Endothelial cell of umbilical vein (primary cell): ENCODE measurements at regions of chrX and their contacts with region 1.

Region 1: DNA sequence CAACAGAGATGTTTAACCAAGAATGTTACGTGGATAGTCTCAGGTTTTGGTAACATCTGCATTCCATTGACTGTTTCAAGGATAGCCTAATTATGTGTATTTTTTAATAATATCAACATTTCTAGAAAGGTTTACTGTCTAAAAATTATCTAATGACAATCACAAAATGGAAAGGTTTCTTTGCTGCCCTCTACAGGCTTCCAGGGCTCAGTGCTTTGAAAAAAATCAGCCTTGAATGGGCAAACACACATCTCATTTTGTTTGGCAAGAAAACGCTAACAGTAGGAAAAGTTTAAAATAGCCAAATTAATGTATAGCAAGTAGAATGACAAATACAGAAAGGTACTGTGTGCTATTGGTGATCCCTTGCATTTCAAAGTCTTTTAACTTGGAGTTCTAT is 223.4 kb upstream of the PRPS2 start:
- DNase-seq: peak; percentile 9
- H3K4me3 ChIP-seq: no peak overlapping the region
- H3K27ac ChIP-seq: no peak overlapping the region
- H3K4me1 ChIP-seq: no peaks in the 10 kb centered on the region
- H3K27me3 ChIP-seq: no peaks in the 10 kb centered on the region
- CTCF ChIP-seq: peak; percentile 41 to 46
- POLR2A ChIP-seq: no peak

Region 2: GRCh38 chrX:11944501-11944900 is 623.4 kb before region 1 on chrX:
- CTCF ChIA-PET with region 1: no interaction called
- POLR2A ChIA-PET with region 1: no interaction called
- dilution Hi-C with region 1: no loop called
- intact Hi-C with region 1: loop called (anchors 10 kb)
- DNase-seq: peak; percentile 15
- H3K4me3 ChIP-seq: no peak overlapping the region
- H3K27ac ChIP-seq: no peak overlapping the region
- H3K4me1 ChIP-seq: peaks cover 3% of the 10 kb centered on the region
- H3K27me3 ChIP-seq: no peaks in the 10 kb centered on the region
- CTCF ChIP-seq: peak; percentile 54 to 63
- POLR2A ChIP-seq: no peak

Region 3: GRCh38 chrX:12080265-12080664 is 487.6 kb before region 1 on chrX:
- CTCF ChIA-PET with region 1: interaction called, 9 read pairs
- POLR2A ChIA-PET with region 1: no interaction called
- dilution Hi-C with region 1: no loop called
- intact Hi-C with region 1: loop called (anchors 1 kb)
- DNase-seq: peak; percentile 42
- H3K4me3 ChIP-seq: no peak overlapping the region
- H3K27ac ChIP-seq: no peak overlapping the region
- H3K4me1 ChIP-seq: no peaks in the 10 kb centered on the region
- H3K27me3 ChIP-seq: no peaks in the 10 kb centered on the region
- CTCF ChIP-seq: peak; percentile 31 to 45
- POLR2A ChIP-seq: no peak

Region 4: DNA sequence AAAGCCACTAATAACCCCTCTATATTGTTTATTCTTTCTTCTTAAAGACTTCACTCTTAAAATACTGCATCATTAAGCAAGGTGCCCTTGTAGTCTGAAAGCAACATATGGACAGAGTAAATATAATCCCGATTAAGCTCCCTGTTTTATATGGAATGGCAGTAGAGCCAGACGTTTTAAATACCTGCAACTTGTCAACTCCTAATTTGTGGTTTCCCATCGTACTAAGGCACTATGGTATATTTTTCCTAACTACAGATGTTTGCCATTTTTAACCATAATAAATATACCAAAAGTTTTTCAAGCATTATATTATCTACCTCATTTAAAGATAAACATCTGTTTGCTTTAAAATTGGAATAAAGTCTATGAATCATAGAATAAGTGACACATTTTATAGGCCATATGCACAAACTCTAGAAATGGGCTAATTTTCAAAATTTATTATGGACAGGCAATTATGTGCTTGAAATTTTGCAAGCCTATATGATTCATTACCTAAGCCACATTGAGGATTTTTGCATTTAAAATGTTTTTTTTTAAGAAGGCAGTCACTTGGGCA is 235.0 kb before region 1 on chrX:
- CTCF ChIA-PET with region 1: no interaction called
- POLR2A ChIA-PET with region 1: no interaction called
- dilution Hi-C with region 1: no loop called
- intact Hi-C with region 1: loop called (anchors 10 kb)
- DNase-seq: no peak
- H3K4me3 ChIP-seq: no peak overlapping the region
- H3K27ac ChIP-seq: no peak overlapping the region
- H3K4me1 ChIP-seq: no peaks in the 10 kb centered on the region
- H3K27me3 ChIP-seq: no peaks in the 10 kb centered on the region
- CTCF ChIP-seq: no peak
- POLR2A ChIP-seq: no peak